ENCODE measurements at regions of chr19 and their contacts with region 1.

Region 1: GRCh38 chr19:35135389-35135909 is 590 bp upstream of the LGI4 start:
- DNase-seq: peak; percentile 75 to 82 (median 82)
- ATAC-seq: peak; percentile 42 to 55 (median 50)
- H3K4me3 ChIP-seq: no peak overlapping the region
- H3K27ac ChIP-seq: peak overlapping the region in 2 of 3 donors; percentile 7 to 97
- H3K4me1 ChIP-seq: peaks cover 0 to 44% (median 13%) of the 10 kb centered on the region in 4 donors
- H3K27me3 ChIP-seq: no peaks in the 10 kb centered on the region
- CTCF ChIP-seq: peak; percentile 89 to 94 (median 92)
- POLR2A ChIP-seq: no peak

Region 2: GRCh38 chr19:35044317-35045117 is 90.9 kb before region 1 on chr19:
- intact Hi-C with region 1: loop called in 1 of 2 experiments (anchors 5 kb)
- DNase-seq: peak in 2 of 3 donors; percentile 61 to 79
- ATAC-seq: no peak
- H3K4me3 ChIP-seq: peak overlapping the region; percentile 54 to 81 (median 81)
- H3K27ac ChIP-seq: peak overlapping the region in 2 of 3 donors; percentile 66 to 97
- H3K4me1 ChIP-seq: peaks cover 0 to 62% (median 32%) of the 10 kb centered on the region in 4 donors
- H3K27me3 ChIP-seq: no peaks in the 10 kb centered on the region
- CTCF ChIP-seq: peak; percentile 95 to 99 (median 96)
- POLR2A ChIP-seq: no peak